Activated CD8-positive, alpha-beta T cell treated with anti-CD3 and anti-CD28 coated beads for 36 hours (primary cell): ENCODE measurements at regions of chr1 and their contacts with region 1.

Region 1: DNA sequence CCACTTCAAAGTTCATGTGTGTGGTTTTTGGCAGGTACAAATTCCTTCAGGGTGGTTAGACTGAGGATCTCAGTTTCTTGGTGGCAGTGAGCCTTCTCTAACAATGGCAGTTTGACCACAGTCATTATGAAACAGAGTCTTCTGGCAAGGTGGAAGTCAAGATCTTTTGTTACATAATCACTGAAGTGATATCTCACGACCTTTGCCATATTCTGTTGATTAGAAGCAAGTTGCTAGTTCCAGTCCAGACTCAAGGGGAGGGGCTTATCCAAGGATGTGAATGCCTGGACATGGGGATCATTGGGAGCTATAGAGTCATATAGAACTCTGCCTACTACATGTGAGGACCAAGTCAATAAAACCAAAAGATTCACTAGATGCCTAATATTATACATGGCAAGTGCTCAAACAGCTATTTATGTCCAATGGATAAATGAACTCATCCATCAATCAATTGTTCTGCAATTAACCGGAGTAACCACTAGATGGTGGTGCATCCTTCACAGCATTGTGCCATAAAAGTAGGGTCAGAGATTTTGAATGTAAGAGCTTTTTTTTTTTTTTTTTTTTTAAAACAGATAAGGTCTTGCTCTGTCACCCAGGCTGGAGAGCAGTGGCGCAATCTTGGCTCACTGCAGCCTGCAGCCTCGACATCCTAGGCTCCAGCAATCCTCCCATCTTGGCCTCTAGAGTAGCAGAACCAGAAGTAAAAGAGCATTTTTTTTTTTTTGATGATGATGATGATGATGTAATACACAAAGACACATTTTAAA is 131.9 kb downstream of the CRB1 start:
- DNase-seq: peak; percentile 24
- ATAC-seq: peak; percentile 79
- H3K4me3 Mint-ChIP-seq: peak overlapping the region; percentile 12
- H3K27ac Mint-ChIP-seq: no peak overlapping the region
- H3K4me1 Mint-ChIP-seq: no peaks in the 10 kb centered on the region
- H3K27me3 Mint-ChIP-seq: peaks cover 4% of the 10 kb centered on the region
- CTCF ChIP-seq: peak; percentile 42

Region 2: GRCh38 chr1:197384471-197384870 is 15.5 kb before region 1 on chr1:
- CTCF ChIA-PET with region 1: interaction called, 24 read pairs
- POLR2A ChIA-PET with region 1: no interaction called
- intact Hi-C with region 1: no loop called
- DNase-seq: no peak
- ATAC-seq: no peak
- H3K4me3 Mint-ChIP-seq: no peak overlapping the region
- H3K27ac Mint-ChIP-seq: no peak overlapping the region
- H3K4me1 Mint-ChIP-seq: peaks cover 3% of the 10 kb centered on the region
- H3K27me3 Mint-ChIP-seq: no peaks in the 10 kb centered on the region
- CTCF ChIP-seq: no peak

Region 3: DNA sequence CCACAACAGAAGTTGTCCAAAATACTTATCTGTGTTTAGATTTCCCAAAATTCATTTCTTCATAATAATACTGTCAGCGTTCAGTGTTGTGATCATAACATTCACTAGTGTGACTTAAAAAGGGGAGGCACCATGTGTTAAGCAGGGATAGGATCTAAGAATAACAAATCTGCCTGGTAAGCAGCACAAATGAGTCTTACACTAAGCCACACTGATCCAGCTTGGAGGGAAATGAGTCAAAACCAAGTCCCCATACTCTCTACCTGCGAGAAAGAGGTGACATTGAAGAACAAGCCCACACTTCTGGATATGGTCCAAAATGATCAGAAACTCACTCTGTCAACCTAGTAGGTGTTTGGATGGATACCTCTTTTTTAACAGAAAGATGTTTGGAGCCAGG is 13.6 kb after region 1 on chr1:
- CTCF ChIA-PET with region 1: interaction called, 16 read pairs
- POLR2A ChIA-PET with region 1: no interaction called
- intact Hi-C with region 1: no loop called
- DNase-seq: no peak
- ATAC-seq: peak; percentile 68
- H3K4me3 Mint-ChIP-seq: no peak overlapping the region
- H3K27ac Mint-ChIP-seq: no peak overlapping the region
- H3K4me1 Mint-ChIP-seq: no peaks in the 10 kb centered on the region
- H3K27me3 Mint-ChIP-seq: no peaks in the 10 kb centered on the region
- CTCF ChIP-seq: no peak